ENCODE measurements at regions of chr17 and their contacts with region 1.

Region 1: DNA sequence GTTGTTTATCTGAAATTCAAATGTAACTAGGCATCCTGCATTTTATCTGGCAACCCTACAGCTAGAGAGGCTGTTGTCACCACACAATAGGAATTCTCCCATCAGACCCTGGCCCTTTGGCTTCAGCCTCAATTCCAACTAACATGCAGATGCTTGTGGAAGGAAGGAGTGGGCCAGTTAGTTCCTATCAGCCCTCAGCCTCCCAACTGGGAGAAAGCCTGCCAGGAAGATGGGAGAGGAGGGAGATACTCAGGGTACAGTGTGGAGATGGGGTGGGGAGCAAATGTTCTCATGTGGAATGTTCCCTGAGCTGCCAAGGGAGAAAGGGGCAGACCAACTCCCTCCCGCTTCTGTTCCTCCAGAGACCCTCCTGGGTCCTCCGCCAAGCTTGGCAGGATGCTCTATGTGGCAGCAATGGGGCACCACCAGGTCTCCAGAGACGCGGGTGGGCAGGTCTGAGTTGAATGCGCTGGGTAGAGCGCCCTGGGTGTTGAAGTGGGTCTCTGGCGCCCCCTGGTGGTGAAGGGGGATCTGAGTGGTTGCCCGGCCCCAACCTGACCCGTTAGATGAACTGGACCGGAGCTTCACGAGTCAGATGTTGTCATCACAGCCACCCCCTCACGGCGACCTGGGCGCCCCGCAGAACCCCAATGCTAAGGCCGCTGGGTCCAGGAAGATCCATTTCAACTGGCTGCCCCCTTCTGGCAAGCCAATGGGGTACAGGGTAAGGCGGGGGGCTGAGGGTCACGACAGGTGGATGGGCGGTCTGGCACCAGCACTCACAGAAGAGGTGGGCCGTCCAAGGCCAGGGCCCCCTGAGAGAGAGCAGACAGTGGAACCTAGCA is 15.2 kb downstream of the GALK1 start:
- H3K4me3 Mint-ChIP-seq: no peak overlapping the region
- H3K27ac Mint-ChIP-seq: peak overlapping the region; percentile 47
- H3K4me1 Mint-ChIP-seq: peaks cover 22% of the 10 kb centered on the region
- H3K27me3 Mint-ChIP-seq: peaks cover 29% of the 10 kb centered on the region

Region 2: DNA sequence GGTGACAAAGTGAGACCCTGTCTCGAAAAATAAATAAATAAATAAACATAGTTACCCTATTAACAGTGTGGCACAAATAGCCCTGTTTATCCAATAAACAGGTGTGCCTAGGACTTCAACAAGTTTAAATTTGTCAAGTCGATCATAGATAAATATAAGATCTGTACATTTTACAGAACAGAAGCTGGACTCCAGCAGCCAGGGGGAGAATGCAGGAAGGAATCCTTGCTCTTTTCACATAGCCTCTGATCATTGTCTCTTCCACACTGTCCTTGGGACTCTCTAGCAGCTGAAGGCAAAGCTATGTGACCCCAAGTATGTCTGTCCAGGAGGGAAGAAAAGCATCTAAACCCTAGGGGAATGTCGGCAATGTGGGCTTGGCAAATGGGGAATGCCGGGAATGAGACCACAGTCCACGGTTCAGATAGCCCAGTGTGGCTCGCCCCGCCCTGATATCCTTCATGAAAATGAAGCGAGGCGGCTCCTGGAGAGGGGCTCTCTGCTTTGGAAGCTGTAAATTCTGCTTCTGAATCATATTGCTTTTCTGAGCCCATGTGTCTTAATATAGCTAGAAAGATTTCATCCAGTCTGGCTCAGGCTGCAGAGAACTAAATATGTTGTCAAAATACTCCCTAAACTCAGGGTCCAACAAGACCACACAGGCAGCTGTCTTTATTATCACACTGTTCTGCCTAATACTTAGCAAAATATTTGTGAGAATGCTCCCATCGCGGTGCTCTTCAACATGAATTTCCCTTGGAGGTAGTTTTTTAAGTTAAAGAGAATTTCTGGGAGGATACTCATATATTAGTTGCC is 319.4 kb before region 1 on chr17:
- intact Hi-C with region 1: no loop called
- H3K4me3 Mint-ChIP-seq: no peak overlapping the region
- H3K27ac Mint-ChIP-seq: no peak overlapping the region
- H3K4me1 Mint-ChIP-seq: peaks cover 29% of the 10 kb centered on the region
- H3K27me3 Mint-ChIP-seq: peaks cover 14% of the 10 kb centered on the region

Region 3: DNA sequence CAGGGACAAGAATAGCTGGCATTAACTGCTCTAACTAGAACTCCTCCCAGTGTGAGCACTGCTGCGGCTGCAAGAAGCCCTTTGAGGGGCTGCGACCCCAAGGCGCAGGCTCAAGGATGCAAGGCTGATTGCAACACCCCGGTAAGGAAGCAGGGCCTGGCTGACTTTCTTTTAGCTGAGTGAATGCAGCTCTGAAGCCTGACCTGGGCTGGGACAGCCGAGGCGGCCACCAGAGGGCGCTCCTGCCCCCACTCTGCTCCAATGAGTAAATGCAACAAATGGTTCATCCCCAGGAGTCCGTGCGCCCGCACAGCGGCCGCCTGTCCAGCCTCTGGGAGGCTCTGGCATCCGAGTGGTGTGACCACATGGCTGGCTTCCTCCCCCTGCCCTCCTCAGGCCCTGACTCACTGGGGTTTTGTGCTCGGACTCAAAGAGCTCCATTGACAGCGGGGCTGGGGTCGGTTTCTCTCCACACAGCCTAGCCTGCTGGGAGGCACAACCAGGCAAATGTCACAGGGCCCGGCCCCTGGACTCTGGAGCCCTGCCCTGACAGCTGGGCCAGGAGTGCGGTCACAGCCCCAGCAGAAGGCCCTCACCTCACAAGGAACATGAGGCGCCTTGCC is 116.8 kb before region 1 on chr17 and contains the start of gene SMIM5:
- intact Hi-C with region 1: loop called (anchors 1 kb)
- H3K4me3 Mint-ChIP-seq: no peak within 1 kb of the TSS
- H3K27ac Mint-ChIP-seq: peak within 1 kb of the TSS; percentile 7
- H3K4me1 Mint-ChIP-seq: peaks cover 14% of the 10 kb centered on the region
- H3K27me3 Mint-ChIP-seq: peaks cover 5% of the 10 kb centered on the region

Region 4: GRCh38 chr17:75679706-75680442 is 69.9 kb before region 1 on chr17:
- intact Hi-C with region 1: loop called (anchors 1 kb)
- H3K4me3 Mint-ChIP-seq: no peak overlapping the region
- H3K27ac Mint-ChIP-seq: no peak overlapping the region
- H3K4me1 Mint-ChIP-seq: peaks cover 22% of the 10 kb centered on the region
- H3K27me3 Mint-ChIP-seq: no peaks in the 10 kb centered on the region

Region 5: DNA sequence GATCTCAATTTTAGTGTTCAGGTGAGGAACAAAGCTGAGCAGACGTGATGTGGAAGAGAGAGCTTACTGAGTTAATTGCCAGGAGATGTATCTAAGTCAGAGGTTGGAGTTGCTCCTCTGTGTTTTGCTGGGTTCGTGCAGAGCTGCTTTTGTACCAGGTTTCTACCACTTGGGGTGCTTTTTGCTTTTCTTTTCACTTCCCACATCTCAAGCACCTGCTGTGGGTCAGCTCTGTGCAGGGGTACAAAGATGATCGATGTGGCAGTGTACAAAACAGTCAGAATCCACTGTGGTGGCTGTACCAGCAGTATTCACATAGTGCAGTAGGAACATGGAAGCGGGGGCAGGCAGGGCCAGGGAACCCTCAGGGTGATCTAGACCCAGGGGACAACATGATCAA is 49.6 kb after region 1 on chr17:
- intact Hi-C with region 1: no loop called
- H3K4me3 Mint-ChIP-seq: no peak overlapping the region
- H3K27ac Mint-ChIP-seq: no peak overlapping the region
- H3K4me1 Mint-ChIP-seq: no peaks in the 10 kb centered on the region
- H3K27me3 Mint-ChIP-seq: no peaks in the 10 kb centered on the region